ENCODE measurements at regions of chr1 and their contacts with region 1.

Region 1: GRCh38 chr1:106217770-106218169 is 838.7 kb upstream of the PRMT6 start:
- DNase-seq: no peak
- H3K4me3 ChIP-seq: no peak overlapping the region
- H3K27ac ChIP-seq: no peak overlapping the region
- H3K4me1 ChIP-seq: no peaks in the 10 kb centered on the region
- H3K27me3 ChIP-seq: no peaks in the 10 kb centered on the region
- CTCF ChIP-seq: peak; percentile 18; the same call in 1 of the 2 replicates
- EP300 ChIP-seq: no peak
- RAD21 ChIP-seq: no peak

Region 2: DNA sequence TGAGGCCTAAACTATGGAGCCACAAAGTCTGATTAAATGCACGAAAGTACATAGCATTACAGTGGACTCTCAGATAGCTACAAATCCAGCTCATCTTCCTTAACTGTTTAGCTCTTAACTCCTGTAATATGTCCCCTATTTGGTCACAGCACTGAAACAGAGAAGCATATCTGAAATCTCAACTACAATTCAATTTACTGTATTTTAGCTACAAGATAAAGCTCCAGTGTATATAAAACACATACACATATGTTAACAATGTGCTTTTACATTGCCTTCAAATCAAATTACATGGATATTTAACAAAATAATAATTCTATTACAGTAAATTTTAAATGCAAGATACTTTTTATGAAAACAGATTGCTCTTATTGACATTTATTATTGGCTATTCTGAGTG is 10.6 kb before region 1 on chr1:
- CTCF ChIA-PET with region 1: interaction called, 19 read pairs
- POLR2A ChIA-PET with region 1: no interaction called
- DNase-seq: peak; percentile 10
- H3K4me3 ChIP-seq: no peak overlapping the region
- H3K27ac ChIP-seq: no peak overlapping the region
- H3K4me1 ChIP-seq: no peaks in the 10 kb centered on the region; a peak in 1 of 4 replicates
- H3K27me3 ChIP-seq: no peaks in the 10 kb centered on the region
- CTCF ChIP-seq: no peak
- EP300 ChIP-seq: peak in 1 of 2 experiments; percentile 85; a peak in 2 of 4 replicates
- RAD21 ChIP-seq: no peak

Region 3: GRCh38 chr1:106498238-106498637 is 280.5 kb after region 1 on chr1:
- CTCF ChIA-PET with region 1: no interaction called
- POLR2A ChIA-PET with region 1: no interaction called
- DNase-seq: no peak
- H3K4me3 ChIP-seq: no peak overlapping the region
- H3K27ac ChIP-seq: no peak overlapping the region
- H3K4me1 ChIP-seq: no peaks in the 10 kb centered on the region
- H3K27me3 ChIP-seq: no peaks in the 10 kb centered on the region
- CTCF ChIP-seq: no peak
- EP300 ChIP-seq: no peak
- RAD21 ChIP-seq: no peak

Measured in SK-N-SH (cell line).